A549 (cell line): ENCODE measurements at regions of chr16 and their contacts with region 1.

Region 1: GRCh38 chr16:84504420-84505248 is at the start of gene MEAK7:
- DNase-seq: peak; percentile 98
- ATAC-seq: peak; percentile 89 to 94
- H3K4me3 ChIP-seq: peak within 1 kb of the TSS; percentile 74
- H3K27ac ChIP-seq: peak within 1 kb of the TSS; percentile 95 to 96
- H3K4me1 ChIP-seq: peaks cover 58% of the 10 kb centered on the region
- CTCF ChIP-seq: no peak
- EP300 ChIP-seq: no peak
- POLR2A ChIP-seq: peak; percentile 81
- RAD21 ChIP-seq: no peak
- polyA plus RNA-seq, gene MEAK7: 26.2 and 31.3 TPM in 2 replicates

Region 2: DNA sequence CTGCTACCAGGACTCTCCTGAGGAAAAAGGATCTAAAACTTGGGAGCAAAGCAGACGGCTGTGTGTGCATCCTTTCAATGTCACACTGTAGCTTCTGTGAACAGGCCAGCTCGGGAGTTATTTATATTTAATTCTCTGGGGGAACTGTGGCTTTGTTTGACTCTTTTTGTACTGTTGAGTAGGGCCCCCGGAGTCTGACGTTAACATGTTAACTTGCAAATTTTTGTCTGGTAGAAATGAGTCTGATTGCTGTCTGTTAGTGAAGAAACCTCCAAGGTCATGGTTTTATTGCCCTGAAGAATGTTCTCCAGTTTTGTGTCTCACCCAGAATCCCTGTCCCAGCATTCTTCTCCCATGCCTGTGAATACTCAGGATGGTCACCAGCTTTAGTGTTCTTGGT is 250.6 kb before region 1 on chr16:
- CTCF ChIA-PET with region 1: no interaction called
- POLR2A ChIA-PET with region 1: no interaction called
- DNase-seq: no peak
- ATAC-seq: no peak
- H3K4me3 ChIP-seq: no peak overlapping the region
- H3K27ac ChIP-seq: no peak overlapping the region
- H3K4me1 ChIP-seq: no peaks in the 10 kb centered on the region
- CTCF ChIP-seq: no peak
- EP300 ChIP-seq: no peak
- POLR2A ChIP-seq: no peak
- RAD21 ChIP-seq: no peak

Region 3: DNA sequence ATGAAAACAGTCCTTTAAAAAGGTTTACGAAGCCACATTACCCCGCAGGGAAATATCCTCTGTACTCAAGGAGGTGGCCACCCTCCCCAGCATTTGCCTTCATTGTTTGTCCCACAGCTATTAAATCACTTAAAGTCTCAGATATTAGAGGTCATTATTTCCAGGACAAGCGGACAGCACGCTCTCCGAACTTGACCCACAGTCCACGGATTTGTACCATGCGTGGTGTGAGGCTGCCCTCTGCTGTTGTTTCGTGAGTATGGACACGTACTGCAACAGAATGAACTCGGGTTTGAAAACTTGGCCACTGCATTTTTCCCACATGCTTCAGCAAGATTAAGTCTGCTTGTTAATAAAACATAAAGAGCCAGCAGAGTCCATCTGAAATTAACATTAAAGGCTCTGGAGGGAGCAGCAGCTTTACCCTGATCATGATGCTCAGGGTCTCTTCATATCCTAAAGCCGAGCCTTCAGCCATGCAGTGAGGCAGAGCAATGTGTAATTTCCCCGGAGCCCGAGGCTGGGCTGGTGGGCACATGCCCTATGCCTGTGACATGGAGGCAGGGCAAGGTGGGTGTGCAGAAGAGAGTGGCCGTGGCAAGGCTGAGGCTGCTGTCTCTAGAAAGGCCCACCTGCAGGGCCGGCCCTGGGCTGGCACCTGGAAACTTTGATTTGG is 19.9 kb before region 1 on chr16:
- CTCF ChIA-PET with region 1: interaction called, 13 read pairs
- POLR2A ChIA-PET with region 1: no interaction called
- DNase-seq: peak; percentile 47 to 62
- ATAC-seq: peak; percentile 68 to 87; a peak in 4 of 6 replicates
- H3K4me3 ChIP-seq: no peak overlapping the region
- H3K27ac ChIP-seq: no peak overlapping the region
- H3K4me1 ChIP-seq: no peaks in the 10 kb centered on the region
- CTCF ChIP-seq: peak; percentile 85
- EP300 ChIP-seq: no peak
- POLR2A ChIP-seq: no peak
- RAD21 ChIP-seq: peak; percentile 95 to 96

Region 4: GRCh38 chr16:84526794-84527503 is 22.3 kb after region 1 on chr16:
- CTCF ChIA-PET with region 1: interaction called, 115 read pairs
- POLR2A ChIA-PET with region 1: interaction called, 3 read pairs
- DNase-seq: no peak
- ATAC-seq: no peak
- H3K4me3 ChIP-seq: no peak overlapping the region
- H3K27ac ChIP-seq: 0 out of 6 replicates have a peak overlapping the region, but pooled peaks of 1 of the 2 experiments have one; percentile 12
- H3K4me1 ChIP-seq: peaks cover 7% of the 10 kb centered on the region
- CTCF ChIP-seq: no peak
- EP300 ChIP-seq: no peak
- POLR2A ChIP-seq: no peak
- RAD21 ChIP-seq: no peak

Region 5: DNA sequence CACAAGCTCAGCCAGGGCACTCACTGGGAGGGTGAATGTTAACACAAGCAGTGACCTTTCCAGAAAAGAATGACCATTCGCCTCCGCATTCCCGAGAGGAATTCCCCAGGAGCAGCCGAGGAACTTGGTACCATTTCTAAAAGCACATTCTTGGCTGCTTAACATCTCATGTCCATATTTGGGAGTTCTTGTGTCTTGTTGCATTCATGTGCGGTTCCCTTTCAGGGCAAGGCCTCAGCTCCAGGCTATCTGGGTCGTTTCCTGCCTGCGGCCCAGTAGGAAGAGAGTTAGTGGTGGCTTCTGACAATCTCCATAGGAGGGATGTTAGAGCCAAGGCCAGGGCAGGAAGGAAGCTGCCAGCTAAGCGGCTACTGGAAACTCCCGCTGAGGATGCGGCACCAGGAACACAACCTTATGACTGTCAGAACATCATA is 27.7 kb after region 1 on chr16:
- CTCF ChIA-PET with region 1: interaction called, 115 read pairs
- POLR2A ChIA-PET with region 1: interaction called, 3 read pairs
- DNase-seq: peak; percentile 62 to 85
- ATAC-seq: peak; percentile 78 to 93
- H3K4me3 ChIP-seq: no peak overlapping the region
- H3K27ac ChIP-seq: peak overlapping the region; percentile 39 to 80
- H3K4me1 ChIP-seq: peaks cover 21% of the 10 kb centered on the region
- CTCF ChIP-seq: no peak
- EP300 ChIP-seq: no peak
- POLR2A ChIP-seq: no peak
- RAD21 ChIP-seq: no peak

Region 6: DNA sequence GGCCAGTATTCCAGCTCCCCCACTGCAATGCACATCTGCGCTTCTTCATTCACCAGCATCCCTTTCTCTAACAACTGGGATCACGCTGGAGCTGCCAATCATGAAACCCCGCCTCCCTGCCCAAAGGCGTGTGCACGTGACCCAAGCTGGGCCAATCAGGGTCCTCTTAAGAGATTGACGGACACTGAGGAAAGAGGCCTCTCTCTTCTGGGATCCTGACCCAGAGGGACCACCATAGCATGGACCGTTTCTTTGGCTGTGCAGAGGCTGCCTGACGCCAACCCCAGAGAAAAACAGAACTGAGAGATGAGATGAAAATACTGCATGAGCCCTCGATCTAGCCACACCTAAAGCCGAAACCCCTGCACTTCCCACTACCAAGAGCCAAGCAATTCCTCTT is 81.3 kb after region 1 on chr16:
- CTCF ChIA-PET with region 1: interaction called, 11 read pairs
- POLR2A ChIA-PET with region 1: no interaction called
- DNase-seq: peak; percentile 40 to 48
- ATAC-seq: peak; percentile 42 to 79; a peak in 4 of 6 replicates
- H3K4me3 ChIP-seq: no peak overlapping the region
- H3K27ac ChIP-seq: no peak overlapping the region
- H3K4me1 ChIP-seq: peaks cover 12% of the 10 kb centered on the region
- CTCF ChIP-seq: no peak
- EP300 ChIP-seq: no peak
- POLR2A ChIP-seq: no peak
- RAD21 ChIP-seq: no peak

Region 7: DNA sequence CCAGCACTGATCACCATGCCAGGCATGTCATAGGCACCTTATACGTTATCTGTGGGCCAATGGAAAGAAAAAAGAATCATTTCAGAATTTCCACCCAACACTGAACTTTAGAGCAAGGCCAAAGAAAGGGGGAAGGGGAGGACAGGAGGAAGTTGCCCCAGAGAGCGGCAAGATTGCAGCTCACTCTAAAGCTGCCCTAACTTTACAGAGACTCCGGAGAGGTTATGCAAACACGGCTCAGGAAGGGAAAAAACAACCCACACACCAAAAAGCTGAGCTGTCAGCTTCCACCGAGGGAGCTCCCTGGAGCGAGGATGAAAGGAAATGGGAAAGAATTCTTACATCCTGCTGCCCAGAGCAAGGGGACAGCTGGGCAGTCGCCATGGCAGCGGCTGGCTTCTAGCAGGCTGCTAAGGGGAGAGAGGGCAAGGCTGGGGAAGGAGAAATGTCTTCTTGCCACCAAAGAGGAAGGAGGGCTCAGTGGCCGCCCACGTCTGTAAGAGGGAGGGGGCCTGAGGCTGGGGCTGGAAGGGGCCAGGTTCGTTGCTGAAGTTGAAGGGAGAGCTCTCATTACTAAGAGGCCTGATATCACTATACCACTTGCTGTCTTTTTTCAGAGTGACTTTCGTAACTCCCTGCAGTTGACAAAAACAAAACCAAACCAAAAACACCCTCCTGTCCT is 95.0 kb after region 1 on chr16:
- CTCF ChIA-PET with region 1: interaction called, 16 read pairs
- POLR2A ChIA-PET with region 1: no interaction called
- DNase-seq: peak in 1 of 2 experiments; percentile 46
- ATAC-seq: peak in 1 of 2 experiments; percentile 26; a peak in 3 of 6 replicates
- H3K4me3 ChIP-seq: no peak overlapping the region
- H3K27ac ChIP-seq: peak overlapping the region; percentile 84 to 95
- H3K4me1 ChIP-seq: peaks cover 68% of the 10 kb centered on the region
- CTCF ChIP-seq: no peak
- EP300 ChIP-seq: no peak
- POLR2A ChIP-seq: no peak
- RAD21 ChIP-seq: no peak

Region 8: DNA sequence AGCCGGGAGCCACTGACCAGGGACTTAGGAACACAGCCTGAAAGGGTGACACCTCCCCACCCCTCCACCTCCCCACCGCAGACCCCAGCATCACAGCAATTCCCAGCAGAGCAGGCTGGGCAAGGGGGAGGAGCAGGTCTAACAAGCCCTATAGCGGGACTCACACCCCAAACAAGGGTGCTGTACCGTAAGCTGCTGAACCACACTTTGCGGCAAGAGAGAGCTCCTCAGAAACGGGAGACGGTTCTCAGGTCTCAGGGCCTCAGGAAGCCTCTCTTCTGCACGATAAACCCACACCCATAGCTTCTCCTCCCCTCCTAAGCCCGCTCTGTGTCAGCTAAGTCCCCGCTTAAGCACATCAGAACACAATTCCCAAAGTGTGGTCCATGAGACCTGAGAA is 124.9 kb after region 1 on chr16:
- CTCF ChIA-PET with region 1: interaction called, 284 read pairs
- POLR2A ChIA-PET with region 1: no interaction called
- DNase-seq: no peak
- ATAC-seq: peak in 1 of 2 experiments; percentile 22; a peak in 2 of 6 replicates
- H3K4me3 ChIP-seq: no peak overlapping the region
- H3K27ac ChIP-seq: no peak overlapping the region
- H3K4me1 ChIP-seq: no peaks in the 10 kb centered on the region
- CTCF ChIP-seq: no peak
- EP300 ChIP-seq: no peak
- POLR2A ChIP-seq: no peak
- RAD21 ChIP-seq: no peak